ENCODE measurements at regions of chr2 and their contacts with region 1.

Region 1: GRCh38 chr2:37414470-37414949 is 70.1 kb downstream of the QPCT start:
- DNase-seq: peak; percentile 49 to 73 (median 59)
- H3K4me3 ChIP-seq: peak overlapping the region in 2 of 3 experiments; percentile 23 to 40
- H3K4me3 Mint-ChIP-seq: peak overlapping the region; percentile 20 to 71
- H3K27ac ChIP-seq: no peak overlapping the region
- H3K27ac Mint-ChIP-seq: peak overlapping the region in 1 of 7 donors; percentile 21
- H3K4me1 ChIP-seq: peaks cover 8 to 10% of the 10 kb centered on the region in 2 donors
- H3K4me1 Mint-ChIP-seq: peaks cover 14% of the 10 kb centered on the region
- H3K27me3 ChIP-seq: no peaks in the 10 kb centered on the region
- H3K27me3 Mint-ChIP-seq: peaks cover 0 to 4% (median 0%) of the 10 kb centered on the region in 3 donors
- CTCF ChIP-seq: peak; percentile 88

Region 2: DNA sequence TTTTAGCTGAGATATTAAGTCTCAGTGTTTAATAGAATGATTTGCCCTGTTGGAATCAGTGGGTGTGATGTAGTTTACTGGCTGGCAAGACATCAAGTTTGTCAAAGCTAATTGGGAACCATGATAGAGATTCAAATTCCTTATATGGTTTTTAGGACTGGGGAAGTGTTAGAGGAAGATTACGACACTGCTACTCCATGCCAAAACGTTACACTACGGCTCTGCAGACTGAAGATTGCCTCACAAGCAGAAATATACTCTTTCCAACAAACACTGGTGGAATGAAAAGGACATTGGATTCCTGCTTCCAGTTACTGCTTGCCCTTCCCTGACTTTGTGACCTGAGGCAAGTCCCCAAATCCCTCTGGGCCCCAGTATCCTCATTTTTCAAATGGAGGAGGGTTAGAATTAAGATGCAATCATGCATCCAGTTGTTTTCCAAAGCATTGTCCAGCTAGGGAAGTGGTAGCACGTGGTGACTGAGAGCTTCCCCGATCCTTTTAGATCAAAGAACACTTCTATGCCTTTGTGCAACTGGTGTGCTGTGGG is 109.4 kb after region 1 on chr2:
- intact Hi-C with region 1: loop called in 1 of 2 experiments (anchors 10 kb)
- DNase-seq: peak; percentile 64 to 86 (median 73)
- H3K4me3 ChIP-seq: peak overlapping the region in 2 of 3 experiments; percentile 16 to 59
- H3K4me3 Mint-ChIP-seq: peak overlapping the region in 1 of 2 donors; percentile 39
- H3K27ac ChIP-seq: peak overlapping the region in 1 of 2 donors; percentile 75
- H3K27ac Mint-ChIP-seq: peak overlapping the region; percentile 70 to 90 (median 86)
- H3K4me1 ChIP-seq: peaks cover 43 to 45% of the 10 kb centered on the region in 2 donors
- H3K4me1 Mint-ChIP-seq: peaks cover 46% of the 10 kb centered on the region
- H3K27me3 ChIP-seq: no peaks in the 10 kb centered on the region
- H3K27me3 Mint-ChIP-seq: no peaks in the 10 kb centered on the region
- CTCF ChIP-seq: no peak

Region 3: DNA sequence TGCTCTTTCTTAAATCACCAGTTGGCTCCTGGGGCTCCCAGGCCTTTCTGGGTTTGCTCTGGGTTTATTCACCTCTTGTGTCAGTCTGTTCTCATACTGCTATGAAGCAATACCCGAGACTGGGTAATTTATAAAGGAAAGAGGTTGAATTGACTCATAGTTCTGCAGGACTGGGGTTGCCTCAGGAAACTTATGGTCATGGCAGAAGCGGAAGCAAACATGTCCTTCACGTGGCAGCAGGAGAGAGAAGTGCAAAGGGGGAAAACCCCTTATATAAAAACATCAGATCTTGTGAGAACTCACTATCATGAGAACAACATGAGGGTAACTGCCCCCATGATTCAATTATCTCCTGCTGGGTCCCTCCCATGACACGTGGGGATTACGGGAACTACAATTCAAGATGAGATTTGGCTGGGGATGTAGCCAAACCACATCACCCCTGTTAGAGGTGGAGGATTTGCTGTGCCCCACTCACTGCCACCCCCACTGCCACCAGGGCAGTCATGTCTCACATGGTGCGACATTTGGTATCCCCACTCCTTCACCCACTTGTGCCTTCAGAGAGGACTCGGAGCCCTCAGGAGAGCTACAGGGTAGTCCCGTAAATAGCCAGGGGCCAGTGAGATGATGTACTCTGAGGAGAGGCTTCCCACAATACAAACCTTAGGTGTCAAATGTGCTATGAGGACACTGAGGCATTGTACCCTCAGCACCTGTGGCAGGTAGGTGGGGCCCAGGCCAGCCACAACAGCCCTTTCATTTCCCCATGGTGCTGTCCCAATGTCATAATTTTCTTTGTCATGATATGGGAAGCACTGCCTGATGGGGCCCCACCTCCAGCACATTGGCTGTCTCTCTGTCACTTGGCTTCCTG is 221.2 kb after region 1 on chr2:
- intact Hi-C with region 1: loop called in 1 of 2 experiments (anchors 5 kb)
- DNase-seq: peak; percentile 97 to 100 (median 99)
- H3K4me3 ChIP-seq: peak overlapping the region in 1 of 3 experiments; percentile 26
- H3K4me3 Mint-ChIP-seq: peak overlapping the region; percentile 34 to 48
- H3K27ac ChIP-seq: peak overlapping the region; percentile 98 to 99
- H3K27ac Mint-ChIP-seq: peak overlapping the region; percentile 99 to 100 (median 99)
- H3K4me1 ChIP-seq: peaks cover 50 to 60% of the 10 kb centered on the region in 2 donors
- H3K4me1 Mint-ChIP-seq: peaks cover 59% of the 10 kb centered on the region
- H3K27me3 ChIP-seq: no peaks in the 10 kb centered on the region
- H3K27me3 Mint-ChIP-seq: peaks cover 0 to 4% (median 2%) of the 10 kb centered on the region in 3 donors
- CTCF ChIP-seq: no peak